ENCODE measurements at regions of chr1 and their contacts with region 1.

Region 1: DNA sequence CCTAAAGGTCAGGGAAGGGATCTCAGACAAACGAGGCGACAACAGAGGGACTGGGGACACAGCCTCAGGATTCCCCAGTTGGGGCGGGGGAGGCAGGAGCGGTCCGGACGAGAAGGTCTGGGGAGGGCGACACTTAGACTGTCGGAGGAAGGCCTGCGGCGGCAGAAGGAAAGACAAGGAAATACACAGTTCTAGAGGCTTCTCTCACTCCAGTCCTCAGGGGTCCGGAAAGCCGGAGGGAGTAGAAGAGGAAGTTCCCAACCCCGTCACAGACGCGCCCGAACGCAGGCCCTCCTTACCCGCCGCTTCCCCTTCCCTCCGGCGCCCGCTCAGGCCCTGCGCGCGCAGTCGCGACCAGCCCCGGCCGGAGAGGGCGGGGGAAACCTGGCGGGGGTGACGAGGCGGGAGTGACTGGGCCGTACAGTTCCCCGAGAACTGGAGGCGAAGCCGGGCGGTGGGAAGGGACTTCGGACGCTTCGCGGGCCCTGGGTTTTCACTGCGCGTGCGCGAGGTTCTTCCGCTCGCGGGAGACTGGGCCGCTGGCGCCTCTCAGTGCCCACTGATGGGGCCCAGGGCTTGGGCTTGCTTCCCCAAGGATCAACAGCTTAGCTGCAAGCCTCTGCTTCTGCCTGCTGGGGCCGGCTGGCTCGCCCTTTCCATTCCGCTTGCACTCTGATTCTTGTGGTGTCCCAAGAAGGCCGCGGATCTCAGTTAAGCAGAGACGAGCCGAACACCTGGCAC is at the start of gene IPP:
- DNase-seq: peak; percentile 76 to 97 (median 87)
- ATAC-seq: peak; percentile 84
- H3K4me3 ChIP-seq: peak within 1 kb of the TSS; percentile 67
- H3K4me3 Mint-ChIP-seq: peak within 1 kb of the TSS; percentile 91
- H3K27ac ChIP-seq: peak within 1 kb of the TSS; percentile 92 to 94
- H3K27ac Mint-ChIP-seq: peak within 1 kb of the TSS; percentile 97
- H3K4me1 ChIP-seq: peaks cover 26% of the 10 kb centered on the region
- H3K4me1 Mint-ChIP-seq: peaks cover 43% of the 10 kb centered on the region
- H3K27me3 ChIP-seq: no peaks in the 10 kb centered on the region
- H3K27me3 Mint-ChIP-seq: no peaks in the 10 kb centered on the region
- CTCF ChIP-seq: peak; percentile 42
- total RNA-seq, gene IPP: 6.0 to 6.6 TPM

Region 2: GRCh38 chr1:45686317-45687013 is 64.0 kb before region 1 on chr1 and contains the start of gene GPBP1L1:
- CTCF ChIA-PET with region 1: interaction called, 4 read pairs
- POLR2A ChIA-PET with region 1: interaction called, 13 read pairs
- intact Hi-C with region 1: loop called (anchors 1 to 2 kb)
- DNase-seq: peak; percentile 96 to 99 (median 98)
- ATAC-seq: peak; percentile 68
- H3K4me3 ChIP-seq: peak within 1 kb of the TSS; percentile 95
- H3K4me3 Mint-ChIP-seq: peak within 1 kb of the TSS; percentile 99
- H3K27ac ChIP-seq: peak within 1 kb of the TSS; percentile 97
- H3K27ac Mint-ChIP-seq: peak within 1 kb of the TSS; percentile 100
- H3K4me1 ChIP-seq: peaks cover 44% of the 10 kb centered on the region
- H3K4me1 Mint-ChIP-seq: peaks cover 51% of the 10 kb centered on the region
- H3K27me3 ChIP-seq: no peaks in the 10 kb centered on the region
- H3K27me3 Mint-ChIP-seq: no peaks in the 10 kb centered on the region
- CTCF ChIP-seq: no peak
- total RNA-seq, gene GPBP1L1: 116 to 125 TPM

Region 3: DNA sequence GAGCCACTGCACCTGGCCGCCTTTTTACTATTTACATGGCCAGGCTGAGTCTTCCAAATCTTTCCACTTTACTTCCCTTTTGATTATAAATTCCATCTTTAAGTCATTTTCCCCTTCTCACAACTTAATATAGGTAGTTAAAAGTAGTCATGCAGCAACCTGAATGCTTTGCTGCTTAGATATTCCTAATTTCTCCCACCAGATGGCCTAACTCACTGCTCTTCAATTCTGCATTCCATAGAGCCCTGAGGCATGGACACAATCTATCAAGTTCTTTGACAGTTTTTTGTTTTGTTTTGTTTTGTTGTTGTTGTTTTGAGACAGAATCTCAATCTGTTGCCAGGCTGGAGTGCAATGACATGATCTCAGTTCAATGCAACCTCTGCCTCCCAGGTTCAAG is 622.0 kb after region 1 on chr1:
- CTCF ChIA-PET with region 1: no interaction called
- POLR2A ChIA-PET with region 1: no interaction called
- intact Hi-C with region 1: no loop called
- DNase-seq: no peak
- ATAC-seq: no peak
- H3K4me3 ChIP-seq: no peak overlapping the region
- H3K4me3 Mint-ChIP-seq: no peak overlapping the region
- H3K27ac ChIP-seq: no peak overlapping the region
- H3K27ac Mint-ChIP-seq: no peak overlapping the region
- H3K4me1 ChIP-seq: no peaks in the 10 kb centered on the region
- H3K4me1 Mint-ChIP-seq: no peaks in the 10 kb centered on the region
- H3K27me3 ChIP-seq: no peaks in the 10 kb centered on the region
- H3K27me3 Mint-ChIP-seq: no peaks in the 10 kb centered on the region
- CTCF ChIP-seq: no peak

Measured in CD4-positive, alpha-beta T cell (primary cell).